Transverse colon (tissue), 4 donors: ENCODE measurements at regions of chr7 and their contacts with region 1.

Region 1: DNA sequence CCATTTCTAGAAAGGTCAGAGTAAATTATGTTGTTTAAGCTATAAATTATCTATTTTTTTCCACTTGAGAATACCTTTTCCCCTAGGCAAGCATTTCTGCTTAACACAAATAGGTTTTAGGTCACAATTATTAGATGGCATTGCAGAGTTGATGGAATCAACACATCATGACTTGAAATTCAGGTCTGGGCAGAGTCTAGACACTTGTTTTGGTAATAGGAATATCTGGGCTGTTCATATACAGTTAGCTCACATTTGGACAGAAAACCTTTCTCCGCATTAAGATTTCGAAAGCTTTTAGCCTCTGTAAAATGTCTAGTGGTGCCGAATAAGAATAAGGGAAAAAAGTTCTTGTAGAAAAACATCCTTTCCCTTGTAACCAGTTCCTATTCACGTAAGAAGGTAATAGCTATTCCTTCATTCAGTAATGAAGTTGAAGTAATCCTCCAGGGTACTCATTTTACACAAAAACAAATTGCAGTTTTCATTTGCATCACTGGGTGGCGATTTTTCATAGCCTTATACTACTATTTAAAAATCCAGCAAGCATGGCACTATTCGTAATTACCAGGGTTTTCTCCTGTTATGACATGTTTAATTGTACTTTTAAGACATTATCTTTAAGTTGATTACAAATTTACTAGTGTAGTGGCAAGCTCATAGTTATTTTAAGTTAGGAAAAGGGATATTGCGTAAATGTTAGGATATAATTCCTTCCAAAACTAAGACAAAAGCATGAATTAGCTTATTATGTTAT is 37.0 kb downstream of the RPA3 start:
- DNase-seq: peak; percentile 36
- H3K4me3 ChIP-seq: no peak overlapping the region
- H3K27ac ChIP-seq: peak overlapping the region in 2 of 4 donors; percentile 10 to 24
- H3K4me1 ChIP-seq: peaks cover 0 to 23% (median 4%) of the 10 kb centered on the region in 4 donors
- H3K27me3 ChIP-seq: no peaks in the 10 kb centered on the region
- CTCF ChIP-seq: peak; percentile 57 to 69 (median 63)
- EP300 ChIP-seq: no peak
- POLR2A ChIP-seq: no peak

Region 2: DNA sequence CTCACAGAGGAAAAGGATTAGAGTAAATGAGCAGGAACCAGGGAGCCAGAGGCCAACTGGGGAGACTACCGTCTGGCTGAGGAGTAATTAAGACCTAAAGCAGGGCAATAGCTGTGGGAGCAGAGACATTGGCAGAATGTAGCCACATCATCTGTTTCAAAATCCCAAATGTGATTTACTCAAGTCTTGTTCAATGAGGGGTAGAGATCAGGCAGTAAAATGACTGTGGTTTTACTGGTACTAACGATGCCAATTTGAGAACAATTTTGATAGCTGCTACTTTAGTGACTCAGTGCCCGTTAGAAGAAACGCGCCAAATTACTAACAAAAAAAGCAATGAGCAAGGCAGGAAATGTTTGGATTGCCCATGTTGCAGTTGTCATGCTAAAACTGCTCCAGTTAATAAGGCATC is 127.3 kb before region 1 on chr7:
- in situ Hi-C with region 1: no loop called
- intact Hi-C with region 1: no loop called
- DNase-seq: no peak
- H3K4me3 ChIP-seq: no peak overlapping the region
- H3K27ac ChIP-seq: no peak overlapping the region
- H3K4me1 ChIP-seq: no peaks in the 10 kb centered on the region
- H3K27me3 ChIP-seq: no peaks in the 10 kb centered on the region
- CTCF ChIP-seq: no peak
- EP300 ChIP-seq: no peak
- POLR2A ChIP-seq: no peak

Region 3: GRCh38 chr7:7640221-7641128 is 40.9 kb before region 1 on chr7 and contains the start of gene UMAD1:
- in situ Hi-C with region 1: no loop called
- intact Hi-C with region 1: no loop called
- DNase-seq: peak; percentile 99
- H3K4me3 ChIP-seq: peak within 1 kb of the TSS; percentile 64 to 91 (median 72)
- H3K27ac ChIP-seq: peak within 1 kb of the TSS; percentile 87 to 94 (median 91)
- H3K4me1 ChIP-seq: peaks cover 3 to 26% (median 16%) of the 10 kb centered on the region in 4 donors
- H3K27me3 ChIP-seq: no peaks in the 10 kb centered on the region
- CTCF ChIP-seq: no peak
- EP300 ChIP-seq: no peak
- POLR2A ChIP-seq: peak; percentile 95
- total RNA-seq, gene UMAD1: 0.40 to 21.3 (median 14.6) TPM

Region 4: GRCh38 chr7:7761340-7761980 is 80.1 kb after region 1 on chr7:
- in situ Hi-C with region 1: loop called in 1 of 4 experiments (anchors 10 kb)
- intact Hi-C with region 1: no loop called
- DNase-seq: no peak
- H3K4me3 ChIP-seq: peak overlapping the region in 3 of 4 donors; percentile 28 to 36 (median 29)
- H3K27ac ChIP-seq: peak overlapping the region; percentile 74 to 79 (median 75)
- H3K4me1 ChIP-seq: peaks cover 0 to 24% (median 7%) of the 10 kb centered on the region in 4 donors
- H3K27me3 ChIP-seq: no peaks in the 10 kb centered on the region
- CTCF ChIP-seq: peak; percentile 24 to 46 (median 34)
- EP300 ChIP-seq: no peak
- POLR2A ChIP-seq: no peak

Region 5: DNA sequence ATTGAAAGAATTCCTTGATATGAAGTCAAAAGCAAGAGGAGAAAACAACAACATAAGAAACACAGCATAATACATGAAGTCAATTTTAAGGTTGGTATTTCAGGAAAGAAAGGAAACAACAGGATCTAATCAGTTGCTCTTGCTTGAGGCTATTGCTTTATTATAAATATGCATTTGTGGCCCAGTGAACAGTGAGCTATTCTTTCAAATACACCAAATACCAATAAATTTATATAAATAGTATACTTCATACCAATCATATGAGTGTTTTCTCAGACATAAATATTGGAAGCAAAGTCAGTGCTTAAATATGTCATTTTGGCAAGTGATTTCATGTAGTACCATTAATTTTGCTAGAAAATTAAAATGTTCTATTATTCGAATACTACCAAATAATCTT is 1558.7 kb after region 1 on chr7:
- in situ Hi-C with region 1: no loop called
- intact Hi-C with region 1: no loop called
- DNase-seq: no peak
- H3K4me3 ChIP-seq: no peak overlapping the region
- H3K27ac ChIP-seq: no peak overlapping the region
- H3K4me1 ChIP-seq: no peaks in the 10 kb centered on the region
- H3K27me3 ChIP-seq: no peaks in the 10 kb centered on the region
- CTCF ChIP-seq: no peak
- EP300 ChIP-seq: no peak
- POLR2A ChIP-seq: no peak